Heart right ventricle (tissue), 16 donors: ENCODE measurements at regions of chr2 and their contacts with region 1.

Region 1: DNA sequence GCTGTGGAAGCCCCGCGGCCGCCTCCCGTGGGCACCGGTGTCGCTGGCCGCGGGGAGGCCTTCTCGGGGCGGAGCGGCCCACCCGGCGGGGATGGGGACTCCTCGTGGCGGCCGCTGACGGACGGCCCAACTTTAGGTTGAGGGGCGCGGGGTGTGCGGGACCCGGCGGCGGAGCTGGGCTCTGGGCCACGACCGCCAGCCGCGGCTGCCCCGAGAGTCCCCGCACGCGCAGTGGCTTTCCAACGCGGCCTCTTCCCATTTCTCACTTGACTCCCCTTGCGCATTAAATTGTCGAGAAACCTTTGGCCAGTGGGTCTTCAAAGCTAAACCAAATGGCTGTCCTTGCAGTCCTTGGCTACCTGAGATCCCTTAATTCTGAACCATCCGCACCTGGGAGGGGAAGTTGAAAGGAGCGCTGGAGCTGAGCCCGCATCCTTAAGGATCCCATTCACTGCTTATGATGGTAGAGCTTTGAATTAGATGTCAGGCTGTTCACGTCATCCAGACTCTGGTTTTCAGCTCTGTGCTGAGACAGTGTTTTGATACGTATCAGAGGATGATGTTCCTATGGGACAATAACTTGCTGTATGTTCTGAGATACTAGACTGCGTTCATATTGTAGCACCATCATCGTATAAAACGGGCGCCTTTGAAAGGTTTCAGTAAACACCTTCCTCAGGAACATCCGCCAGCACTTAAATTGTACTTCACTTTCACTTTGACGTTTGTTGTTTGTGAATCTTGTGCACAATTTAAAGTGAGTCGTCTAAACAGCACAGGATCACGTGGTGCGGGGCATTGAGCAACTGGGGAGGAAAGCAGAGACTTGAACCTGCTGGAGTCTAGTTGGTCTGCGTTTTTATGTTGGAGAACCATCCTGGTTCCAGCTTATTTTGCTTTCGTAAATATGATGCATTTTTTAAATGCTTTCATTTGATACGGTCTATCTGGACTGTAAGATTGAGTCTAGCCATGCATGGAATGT is 874 bp downstream of the CLIP4 start:
- DNase-seq: peak; percentile 30 to 54
- ATAC-seq: peak; percentile 19 to 49 (median 37)
- H3K4me3 ChIP-seq: peak overlapping the region; percentile 43 to 88 (median 74)
- H3K27ac ChIP-seq: peak overlapping the region; percentile 6 to 93 (median 84)
- H3K4me1 ChIP-seq: peaks cover 0 to 55% (median 34%) of the 10 kb centered on the region in 9 donors
- H3K27me3 ChIP-seq: peaks cover 0 to 8% (median 0%) of the 10 kb centered on the region in 7 donors
- CTCF ChIP-seq: no peak

Region 2: GRCh38 chr2:28981016-28981441 is 135.1 kb before region 1 on chr2 and contains the start of gene TOGARAM2:
- intact Hi-C with region 1: loop called in 1 of 10 experiments (anchors 1 kb)
- DNase-seq: peak; percentile 20 to 40
- ATAC-seq: peak; percentile 23 to 81 (median 60)
- H3K4me3 ChIP-seq: no peak within 1 kb of the TSS
- H3K27ac ChIP-seq: peak within 1 kb of the TSS in 8 of 10 donors; percentile 4 to 79 (median 68)
- H3K4me1 ChIP-seq: peaks cover 0 to 32% (median 7%) of the 10 kb centered on the region in 9 donors
- H3K27me3 ChIP-seq: no peaks in the 10 kb centered on the region
- CTCF ChIP-seq: no peak
- total RNA-seq, gene TOGARAM2: 1.4 to 56.7 (median 14.6) TPM

Region 3: DNA sequence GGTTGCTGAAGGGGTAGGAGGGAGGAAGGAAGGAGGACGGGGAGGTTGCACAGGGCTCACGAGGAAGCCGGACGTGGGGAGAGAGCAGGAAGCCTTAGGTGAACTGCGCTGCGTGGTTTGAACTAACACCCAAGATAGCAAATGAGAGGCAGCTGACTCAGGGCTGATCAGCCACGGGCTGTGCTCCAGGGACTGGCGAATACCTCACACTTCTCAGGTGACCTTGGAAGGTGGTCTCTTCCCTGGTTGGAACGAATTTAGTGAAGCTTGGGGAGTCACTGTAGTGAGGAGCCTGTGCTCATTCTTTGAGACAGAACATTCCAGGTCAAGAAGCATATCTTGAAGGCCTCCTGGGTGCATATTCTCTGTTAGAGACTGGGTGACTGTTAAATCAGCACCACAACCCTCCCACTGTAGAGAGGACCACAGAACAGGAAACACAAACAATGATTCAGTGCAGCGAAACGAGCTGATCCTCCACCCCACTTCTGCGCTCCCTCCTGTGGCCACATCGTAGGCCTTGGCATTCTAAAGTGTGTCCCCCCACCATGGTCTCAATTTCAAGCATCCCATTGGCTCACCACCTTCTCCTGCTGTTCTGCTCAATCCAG is 101.2 kb before region 1 on chr2:
- intact Hi-C with region 1: loop called in 3 of 10 experiments (anchors 2 to 10 kb)
- DNase-seq: peak; percentile 63 to 67
- ATAC-seq: peak; percentile 3 to 48 (median 26)
- H3K4me3 ChIP-seq: peak overlapping the region in 8 of 10 donors; percentile 1 to 41 (median 29)
- H3K27ac ChIP-seq: peak overlapping the region; percentile 49 to 95 (median 88)
- H3K4me1 ChIP-seq: peaks cover 22 to 84% (median 72%) of the 10 kb centered on the region in 9 donors
- H3K27me3 ChIP-seq: no peaks in the 10 kb centered on the region
- CTCF ChIP-seq: peak in 2 of 9 donors; percentile 23 to 33

Region 4: GRCh38 chr2:29066271-29066860 is 49.7 kb before region 1 on chr2:
- intact Hi-C with region 1: loop called in 1 of 10 experiments (anchors 5 kb)
- DNase-seq: no peak
- ATAC-seq: peak in 2 of 8 donors; percentile 35 to 37
- H3K4me3 ChIP-seq: no peak overlapping the region
- H3K27ac ChIP-seq: no peak overlapping the region
- H3K4me1 ChIP-seq: peaks cover 0 to 21% (median 7%) of the 10 kb centered on the region in 9 donors
- H3K27me3 ChIP-seq: peaks cover 0 to 1% (median 0%) of the 10 kb centered on the region in 7 donors
- CTCF ChIP-seq: no peak

Region 5: DNA sequence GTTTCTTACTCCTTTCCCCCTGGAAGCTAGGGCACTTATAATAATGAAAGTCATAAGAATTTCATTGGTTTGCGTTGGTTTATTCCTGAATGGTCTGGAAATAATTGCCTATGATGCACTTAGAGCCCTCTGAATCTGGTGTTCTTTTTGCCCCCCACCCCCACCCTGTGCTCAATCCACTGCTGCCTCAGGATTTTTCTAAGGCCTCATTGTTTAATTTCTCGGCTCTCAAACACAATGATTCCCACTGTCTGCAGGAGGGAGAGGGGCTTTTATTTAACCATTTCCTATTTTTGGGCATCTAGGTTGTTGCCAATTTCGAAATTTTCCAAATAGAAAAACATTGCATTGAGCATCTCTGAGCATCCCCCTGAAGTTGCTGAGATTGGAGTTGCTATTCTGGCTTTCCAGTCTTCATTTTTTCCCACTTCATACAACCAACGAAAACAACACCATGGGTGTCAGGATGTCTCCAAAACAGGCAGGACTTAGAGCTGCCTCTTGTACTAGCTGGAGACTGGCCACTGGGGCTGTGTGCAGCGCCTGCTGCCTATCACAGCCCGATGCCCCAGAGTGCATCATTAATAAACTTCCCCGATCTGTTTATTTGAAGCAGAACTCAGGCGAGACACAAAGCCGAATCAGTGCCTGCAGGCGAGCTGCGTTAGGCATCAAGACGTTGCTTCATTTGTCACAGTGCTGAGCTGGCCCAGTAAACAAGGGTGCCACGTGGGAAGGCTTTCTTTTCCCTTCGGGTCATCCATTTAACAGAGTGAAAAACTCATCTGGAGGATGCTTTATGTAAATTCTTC is 40.0 kb before region 1 on chr2:
- intact Hi-C with region 1: loop called in 1 of 10 experiments (anchors 5 kb)
- DNase-seq: no peak
- ATAC-seq: peak in 1 of 8 donors; percentile 41
- H3K4me3 ChIP-seq: no peak overlapping the region
- H3K27ac ChIP-seq: no peak overlapping the region
- H3K4me1 ChIP-seq: peaks cover 0 to 15% (median 5%) of the 10 kb centered on the region in 9 donors
- H3K27me3 ChIP-seq: peaks cover 0 to 7% (median 0%) of the 10 kb centered on the region in 7 donors
- CTCF ChIP-seq: no peak